ENCODE measurements at regions of chr19 and their contacts with region 1.

Region 1: GRCh38 chr19:47225746-47226425 is 5.1 kb downstream of the BBC3 start:
- DNase-seq: peak; percentile 81 to 91 (median 86)
- ATAC-seq: peak; percentile 55 to 62
- H3K4me3 Mint-ChIP-seq: peak overlapping the region in 9 of 10 donors; percentile 61 to 89 (median 75)
- H3K27ac Mint-ChIP-seq: peak overlapping the region; percentile 6 to 94 (median 88)
- H3K4me1 Mint-ChIP-seq: peaks cover 6 to 21% (median 12%) of the 10 kb centered on the region in 4 donors
- H3K27me3 Mint-ChIP-seq: no peaks in the 10 kb centered on the region

Region 2: DNA sequence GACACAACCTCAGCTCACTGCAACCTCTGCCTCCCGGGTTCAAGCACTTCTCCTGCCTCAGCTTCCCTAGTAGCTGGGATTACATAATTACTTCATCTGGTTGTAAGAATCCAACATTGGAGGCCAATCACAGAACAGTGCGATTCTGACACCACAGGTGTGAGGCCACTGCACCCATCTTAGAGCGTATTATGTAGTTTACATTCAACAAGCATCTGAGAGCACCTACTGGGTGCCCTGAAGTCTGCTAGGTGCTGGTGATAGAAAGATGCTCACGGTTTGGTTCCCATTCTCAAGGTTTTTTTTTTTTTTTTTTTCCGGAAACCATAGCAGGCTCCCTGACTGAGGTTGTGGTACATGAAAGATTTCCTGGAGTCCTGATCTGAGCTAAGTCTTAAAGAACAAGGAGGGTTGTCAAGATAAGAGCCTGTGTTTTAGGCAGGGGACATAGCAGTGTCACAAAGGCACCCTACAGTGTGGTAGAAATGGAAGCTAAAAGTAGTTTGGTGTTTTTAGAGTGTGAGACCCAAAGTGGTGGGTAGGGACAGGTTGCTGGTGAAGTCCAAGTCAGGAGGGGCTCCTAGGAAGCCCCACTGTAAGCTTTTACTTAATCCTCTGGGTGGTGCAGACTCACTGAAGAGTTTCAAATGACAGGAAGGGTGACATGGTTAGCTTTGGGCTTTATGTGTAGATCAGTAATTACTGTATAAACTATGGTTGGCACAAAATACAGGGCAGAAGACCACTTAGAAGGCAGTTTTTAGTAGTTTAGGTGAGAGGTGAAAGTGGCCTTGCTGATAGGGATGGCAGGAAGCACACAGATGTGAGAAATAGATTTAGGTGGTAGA is 80.0 kb before region 1 on chr19:
- POLR2A ChIA-PET with region 1: interaction called, 12 read pairs
- DNase-seq: peak in 8 of 10 donors; percentile 29 to 80 (median 49)
- ATAC-seq: peak; percentile 95 to 98
- H3K4me3 Mint-ChIP-seq: peak overlapping the region; percentile 55 to 83 (median 74)
- H3K27ac Mint-ChIP-seq: peak overlapping the region; percentile 82 to 94 (median 91)
- H3K4me1 Mint-ChIP-seq: peaks cover 28 to 82% (median 56%) of the 10 kb centered on the region in 4 donors
- H3K27me3 Mint-ChIP-seq: no peaks in the 10 kb centered on the region

Region 3: DNA sequence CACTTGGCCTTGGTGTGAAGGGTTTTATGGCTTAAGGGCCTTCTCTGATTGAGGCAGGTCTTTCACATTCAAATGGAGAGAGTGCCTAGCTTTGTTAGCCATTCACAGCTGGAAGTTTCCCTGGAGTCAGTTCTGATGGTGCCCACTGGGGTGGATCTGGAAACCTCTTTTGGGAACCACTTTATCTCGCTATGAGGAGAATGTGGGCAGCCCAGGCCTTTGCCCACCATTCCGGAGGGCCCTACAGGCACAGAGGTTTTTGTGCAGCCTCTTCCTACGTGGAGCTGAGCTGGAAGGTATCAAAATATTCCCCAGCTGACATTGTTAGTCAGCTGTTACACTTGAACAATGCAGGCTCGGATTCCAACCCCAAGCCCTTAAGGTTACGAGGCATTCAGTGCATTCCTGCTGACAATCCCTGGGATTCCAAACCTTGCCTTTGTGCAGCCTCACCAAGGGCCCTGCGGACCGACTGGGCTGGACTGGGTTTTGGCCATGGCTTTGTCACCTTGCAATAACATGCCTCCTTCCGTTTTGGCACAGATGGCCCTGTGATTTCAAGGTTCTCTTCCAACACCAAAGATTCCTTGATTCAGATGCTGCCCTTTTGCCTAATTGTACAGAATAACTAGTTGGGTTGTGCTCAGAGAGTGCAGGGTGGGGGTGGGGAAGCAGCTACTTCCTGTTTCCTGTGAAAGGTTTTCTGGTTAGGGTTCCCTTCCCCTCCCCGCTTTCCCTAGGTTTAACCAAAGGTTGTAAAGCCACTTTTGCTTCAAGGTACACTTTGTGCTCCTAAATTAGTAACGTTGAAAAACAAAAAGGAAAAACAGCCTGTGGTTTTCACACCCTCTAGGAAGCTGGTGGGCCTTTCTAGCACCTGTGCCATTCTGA is 68.2 kb before region 1 on chr19:
- POLR2A ChIA-PET with region 1: interaction called, 46 read pairs
- DNase-seq: peak in 6 of 10 donors; percentile 4 to 52 (median 38)
- ATAC-seq: peak; percentile 21 to 23
- H3K4me3 Mint-ChIP-seq: peak overlapping the region; percentile 61 to 91 (median 82)
- H3K27ac Mint-ChIP-seq: peak overlapping the region; percentile 83 to 98 (median 93)
- H3K4me1 Mint-ChIP-seq: peaks cover 28 to 77% (median 65%) of the 10 kb centered on the region in 4 donors
- H3K27me3 Mint-ChIP-seq: no peaks in the 10 kb centered on the region

Region 4: DNA sequence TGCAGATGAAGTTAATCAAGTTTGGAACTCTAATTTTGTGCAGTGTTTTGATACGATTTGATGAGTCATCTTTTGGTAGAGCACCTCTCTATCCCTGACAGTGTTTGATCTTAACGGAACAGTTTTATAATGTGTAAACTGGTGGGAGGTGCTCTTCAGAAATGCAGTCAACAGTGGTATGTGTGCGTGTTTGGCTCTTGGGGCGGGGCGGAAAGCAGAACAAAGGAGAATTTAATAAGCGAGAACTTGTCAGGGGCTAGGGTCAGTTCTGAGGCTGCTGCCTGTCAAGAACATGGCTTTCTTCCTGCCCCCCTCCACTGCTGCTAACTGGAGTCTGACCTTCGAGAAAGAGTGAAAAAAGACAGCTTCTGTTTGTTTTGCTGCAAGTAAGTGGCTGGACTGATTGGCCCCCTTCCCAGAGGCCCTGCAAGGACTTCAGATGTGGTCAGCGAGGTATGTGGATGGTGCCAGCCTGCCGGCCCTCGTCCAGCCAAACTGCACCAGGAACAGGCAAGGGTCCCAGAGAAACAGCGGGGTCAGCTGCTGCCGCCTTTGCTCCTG is 35.6 kb before region 1 on chr19:
- POLR2A ChIA-PET with region 1: interaction called, 30 read pairs
- DNase-seq: peak; percentile 19 to 69 (median 43)
- ATAC-seq: peak; percentile 29 to 44
- H3K4me3 Mint-ChIP-seq: peak overlapping the region in 9 of 10 donors; percentile 44 to 82 (median 64)
- H3K27ac Mint-ChIP-seq: peak overlapping the region; percentile 0 to 99 (median 96)
- H3K4me1 Mint-ChIP-seq: peaks cover 27 to 81% (median 67%) of the 10 kb centered on the region in 4 donors
- H3K27me3 Mint-ChIP-seq: no peaks in the 10 kb centered on the region

Region 5: DNA sequence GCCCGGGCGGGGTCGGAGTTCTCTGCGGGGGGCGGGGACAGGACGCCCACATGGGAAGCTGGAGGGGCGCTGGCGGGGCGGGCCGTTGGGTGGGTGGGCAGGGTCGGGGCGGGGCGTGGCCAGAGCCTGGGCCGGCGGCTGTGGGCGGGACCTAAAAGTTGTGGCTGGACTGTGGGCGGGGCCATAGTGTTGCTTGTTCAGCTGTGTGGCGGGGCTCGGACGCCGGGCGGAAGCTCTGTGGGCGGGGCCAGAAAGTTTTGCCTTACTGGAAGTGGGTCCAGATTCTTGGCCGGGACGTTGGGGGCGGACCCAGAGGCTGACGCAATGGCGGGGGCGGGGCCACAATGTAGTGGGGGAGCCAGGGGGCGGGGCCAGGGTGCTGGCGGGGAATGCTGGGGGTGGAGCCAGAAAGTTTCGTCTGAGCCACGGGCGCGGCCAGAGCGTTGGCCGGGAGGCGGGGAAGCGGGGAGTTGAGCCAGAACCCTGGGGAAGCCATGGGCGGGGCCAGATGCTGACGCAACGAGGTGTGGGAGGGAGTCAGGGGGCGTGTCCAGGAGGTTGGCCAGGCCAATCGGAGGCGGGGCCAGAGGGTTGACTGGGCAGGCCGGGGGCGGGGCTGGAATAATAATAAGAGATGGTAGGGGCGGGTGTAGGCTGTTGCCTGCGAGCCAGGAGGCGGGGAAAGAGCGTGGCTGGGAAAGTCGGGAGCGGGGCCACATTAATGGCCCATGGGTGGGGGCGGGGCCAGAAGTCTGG is 31.0 kb after region 1 on chr19:
- POLR2A ChIA-PET with region 1: interaction called, 24 read pairs
- DNase-seq: peak; percentile 94 to 99 (median 98)
- ATAC-seq: peak; percentile 74 to 82
- H3K4me3 Mint-ChIP-seq: peak overlapping the region; percentile 89 to 97 (median 93)
- H3K27ac Mint-ChIP-seq: peak overlapping the region; percentile 93 to 99 (median 97)
- H3K4me1 Mint-ChIP-seq: peaks cover 38 to 53% (median 45%) of the 10 kb centered on the region in 4 donors
- H3K27me3 Mint-ChIP-seq: no peaks in the 10 kb centered on the region

Region 6: DNA sequence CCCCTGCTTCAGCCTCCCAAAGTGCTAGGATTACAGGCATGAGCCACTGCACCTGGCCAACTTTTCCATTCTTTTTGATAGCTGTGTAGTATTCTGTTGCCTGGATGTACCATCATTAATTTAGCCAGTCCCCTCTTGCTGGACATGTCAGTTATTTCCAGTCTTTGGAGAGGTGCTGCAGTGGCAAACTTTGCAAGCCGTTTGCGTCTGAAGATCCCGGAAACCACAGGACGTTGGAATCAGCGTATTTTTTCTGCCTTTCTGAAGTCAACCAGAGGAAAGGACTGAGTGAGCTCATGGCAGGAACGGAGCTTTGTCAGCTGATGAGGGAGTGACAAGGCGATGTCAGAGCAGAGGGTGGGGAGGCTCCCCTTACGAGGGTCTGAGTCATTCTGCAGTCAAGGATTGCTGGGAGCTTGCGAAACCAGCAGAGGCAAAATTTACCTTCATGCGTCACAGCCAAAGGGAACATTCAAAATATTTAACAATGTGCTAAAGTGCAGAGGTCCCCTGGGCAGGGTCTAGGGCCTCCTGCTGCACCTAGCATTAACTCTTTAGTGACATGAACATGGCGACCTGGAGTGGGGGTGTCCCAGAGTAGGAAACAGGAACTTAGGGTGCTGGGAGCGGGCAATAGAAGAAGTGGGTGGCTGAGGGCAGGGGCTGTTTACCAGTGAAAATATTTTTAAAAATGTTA is 89.4 kb after region 1 on chr19:
- POLR2A ChIA-PET with region 1: no interaction called
- DNase-seq: no peak
- ATAC-seq: no peak
- H3K4me3 Mint-ChIP-seq: peak overlapping the region in 1 of 10 donors; percentile 33
- H3K27ac Mint-ChIP-seq: no peak overlapping the region
- H3K4me1 Mint-ChIP-seq: peaks cover 0 to 7% (median 0%) of the 10 kb centered on the region in 4 donors
- H3K27me3 Mint-ChIP-seq: peaks cover 6 to 45% (median 20%) of the 10 kb centered on the region in 5 donors

Region 7: GRCh38 chr19:47336853-47337279 is 111.0 kb after region 1 on chr19:
- POLR2A ChIA-PET with region 1: no interaction called
- DNase-seq: peak in 1 of 10 donors; percentile 19
- ATAC-seq: peak in 1 of 2 donors; percentile 47
- H3K4me3 Mint-ChIP-seq: peak overlapping the region in 2 of 10 donors; percentile 15 to 18
- H3K27ac Mint-ChIP-seq: peak overlapping the region in 3 of 10 donors; percentile 20 to 72 (median 29)
- H3K4me1 Mint-ChIP-seq: peaks cover 5 to 18% (median 13%) of the 10 kb centered on the region in 4 donors
- H3K27me3 Mint-ChIP-seq: peaks cover 0 to 7% (median 0%) of the 10 kb centered on the region in 5 donors

Measured in naive thymus-derived CD8-positive, alpha-beta T cell (primary cell).